GM13976 (cell line): ENCODE measurements at regions of chr9 and their contacts with region 1.

Region 1: DNA sequence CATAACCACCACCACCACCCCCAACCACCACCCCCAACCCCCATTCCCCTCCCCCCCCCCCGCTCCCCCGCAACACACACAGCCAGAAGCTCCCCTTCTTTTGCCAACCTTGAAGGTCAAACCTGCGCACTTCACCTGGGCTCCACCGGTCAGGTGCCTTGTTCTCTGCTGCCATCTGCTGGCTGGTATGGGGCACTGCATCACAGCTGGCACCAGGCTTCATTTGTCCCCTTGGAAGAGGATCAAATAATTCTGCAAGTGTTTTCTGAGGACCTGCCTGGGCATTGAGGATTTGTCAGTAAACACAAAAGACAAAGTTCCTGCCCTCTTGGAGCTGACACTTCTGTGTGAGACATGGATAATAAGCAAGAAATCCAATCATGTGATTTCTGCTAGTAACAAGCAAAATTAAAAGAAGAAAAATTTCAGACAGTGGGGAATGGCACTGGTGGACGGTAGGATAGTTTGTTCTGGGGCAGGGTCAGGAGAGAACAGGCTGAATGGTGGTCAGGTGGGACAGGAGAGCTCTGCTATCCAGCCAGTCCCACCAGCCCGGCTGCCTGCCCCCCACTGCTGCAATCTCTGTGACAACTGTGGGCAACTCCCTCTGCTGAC is 55.6 kb upstream of the LMX1B start:
- DNase-seq: peak; percentile 89
- CTCF ChIP-seq: peak; percentile 98

Region 2: GRCh38 chr9:126500684-126501382 is 57.3 kb before region 1 on chr9:
- in situ Hi-C with region 1: loop called (anchors 10 kb)
- DNase-seq: peak; percentile 88
- CTCF ChIP-seq: peak; percentile 93